Posterior vena cava (tissue), 2 donors: ENCODE measurements at regions of chr1 and their contacts with region 1.

Region 1: GRCh38 chr1:61079898-61080336 is 2.4 kb upstream of the NFIA start:
- DNase-seq: peak; percentile 91

Region 2: GRCh38 chr1:60765204-60765603 is 314.7 kb before region 1 on chr1:
- intact Hi-C with region 1: no loop called
- DNase-seq: no peak

Region 3: DNA sequence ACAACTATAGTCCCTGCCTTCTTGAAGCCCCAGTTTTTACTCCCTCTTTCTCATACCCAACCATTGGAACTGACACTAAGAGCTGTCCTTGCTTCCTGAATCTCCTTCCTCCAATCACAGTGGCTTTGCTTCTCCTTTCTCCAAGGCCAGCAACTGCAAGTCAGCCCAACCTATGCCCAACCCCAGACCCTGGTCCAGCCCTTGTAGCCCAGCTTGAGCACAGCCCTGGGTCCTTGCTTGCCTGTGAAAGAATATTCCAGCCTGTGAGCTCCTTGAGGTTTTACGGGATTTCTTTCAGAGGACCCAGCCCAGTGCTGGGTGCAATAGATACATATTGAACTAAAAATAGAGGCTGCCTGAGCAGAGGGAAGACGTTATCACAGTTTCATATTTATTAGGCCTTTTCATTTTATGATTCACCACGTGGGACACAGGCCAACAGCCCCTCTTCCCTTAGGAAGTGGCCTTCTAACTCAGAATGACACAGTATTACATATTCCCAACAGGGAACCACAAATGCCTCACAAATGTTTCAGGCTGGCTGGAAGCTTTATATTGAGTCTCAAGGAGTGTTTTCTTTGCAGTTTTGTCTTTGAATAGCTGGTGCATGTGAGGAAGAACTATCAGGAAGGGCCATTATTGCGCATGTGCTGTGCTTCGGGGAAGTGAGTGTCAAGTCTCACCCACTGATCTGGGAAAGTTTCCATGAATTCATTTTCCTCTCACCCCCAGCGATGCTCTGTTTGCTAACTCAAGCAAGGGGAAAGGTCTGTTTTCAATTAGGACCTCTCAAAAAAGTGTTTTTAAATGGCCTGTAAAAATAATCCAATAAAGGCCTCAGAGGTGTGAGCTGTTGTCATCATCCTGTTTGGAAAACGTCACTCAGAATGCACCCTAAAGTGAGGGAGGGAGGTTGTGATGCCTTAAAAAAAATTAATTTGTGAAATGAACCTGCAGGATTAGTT is 89.9 kb before region 1 on chr1:
- intact Hi-C with region 1: loop called in 1 of 2 experiments (anchors 5 kb)
- DNase-seq: peak; percentile 91

Region 4: DNA sequence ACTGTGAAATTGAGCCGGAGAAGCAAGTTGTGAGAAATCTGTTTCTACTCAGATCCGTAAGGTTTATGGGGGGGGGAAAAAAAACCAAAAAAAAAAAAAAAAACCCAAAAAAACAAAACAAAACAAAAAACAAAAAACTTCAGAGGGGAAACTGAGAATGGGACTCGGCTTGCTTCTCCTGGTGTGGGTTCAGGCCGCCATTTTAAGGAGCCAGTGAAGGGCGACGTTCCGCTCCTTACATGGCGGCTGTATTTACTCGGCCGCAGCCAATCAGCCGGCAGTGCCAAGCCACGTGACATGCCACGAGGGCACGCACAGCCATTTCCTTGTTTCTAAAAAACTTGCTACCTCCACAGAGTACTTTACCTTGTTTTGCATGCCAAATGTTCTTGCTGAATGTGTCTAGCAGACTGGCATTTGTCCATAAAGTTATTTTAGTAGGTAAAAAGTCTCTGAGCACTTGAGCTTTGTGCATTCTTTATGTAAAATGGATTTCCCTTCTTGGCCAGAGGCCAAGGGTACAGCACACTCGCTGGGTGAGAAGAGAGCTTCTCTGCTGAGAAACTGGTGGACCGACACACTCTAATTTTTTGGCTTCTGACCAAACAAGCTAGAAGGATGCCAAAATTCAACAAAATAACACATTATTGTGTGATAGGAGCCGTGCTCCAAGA is 104.3 kb after region 1 on chr1:
- intact Hi-C with region 1: loop called in 1 of 2 experiments (anchors 10 kb)
- DNase-seq: peak; percentile 97

Region 5: DNA sequence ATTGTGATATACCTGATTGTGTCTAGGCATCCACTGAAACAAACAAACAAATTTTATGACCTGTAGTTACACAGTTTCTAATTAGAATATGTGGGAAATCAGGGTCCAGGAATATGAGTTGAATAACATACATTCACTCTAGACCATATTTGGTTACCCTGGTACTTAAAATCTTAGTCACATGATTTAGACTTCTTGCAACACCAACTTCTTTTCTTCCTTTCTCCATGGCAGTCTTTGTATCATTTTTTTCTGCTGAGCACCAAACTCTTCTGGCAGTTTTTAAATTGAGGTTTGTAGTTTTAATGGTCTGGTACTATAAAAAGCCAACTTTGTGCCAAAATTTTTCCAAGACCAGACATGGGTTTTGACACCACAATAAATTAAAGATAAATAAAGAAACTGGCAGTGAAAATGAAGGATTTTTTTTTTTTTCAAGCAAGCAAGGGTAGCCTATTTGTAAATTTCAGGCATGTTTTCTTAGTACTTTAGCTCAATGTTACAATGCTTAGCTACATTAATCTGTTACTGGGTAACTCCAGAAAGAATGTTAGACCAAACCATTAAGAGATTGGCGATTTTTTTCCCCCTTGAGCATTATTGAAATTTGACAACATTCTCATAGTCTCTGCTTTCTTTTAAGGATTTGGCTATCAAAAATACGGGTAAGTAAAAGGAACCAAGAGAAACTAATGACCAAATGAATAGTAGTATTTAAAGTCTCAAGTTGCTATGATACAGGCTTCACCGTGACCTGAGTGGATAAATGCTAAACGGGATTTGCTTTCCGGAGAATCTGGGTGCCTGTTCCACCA is 110.9 kb after region 1 on chr1:
- intact Hi-C with region 1: loop called (anchors 5 to 10 kb)
- DNase-seq: no peak

Region 6: DNA sequence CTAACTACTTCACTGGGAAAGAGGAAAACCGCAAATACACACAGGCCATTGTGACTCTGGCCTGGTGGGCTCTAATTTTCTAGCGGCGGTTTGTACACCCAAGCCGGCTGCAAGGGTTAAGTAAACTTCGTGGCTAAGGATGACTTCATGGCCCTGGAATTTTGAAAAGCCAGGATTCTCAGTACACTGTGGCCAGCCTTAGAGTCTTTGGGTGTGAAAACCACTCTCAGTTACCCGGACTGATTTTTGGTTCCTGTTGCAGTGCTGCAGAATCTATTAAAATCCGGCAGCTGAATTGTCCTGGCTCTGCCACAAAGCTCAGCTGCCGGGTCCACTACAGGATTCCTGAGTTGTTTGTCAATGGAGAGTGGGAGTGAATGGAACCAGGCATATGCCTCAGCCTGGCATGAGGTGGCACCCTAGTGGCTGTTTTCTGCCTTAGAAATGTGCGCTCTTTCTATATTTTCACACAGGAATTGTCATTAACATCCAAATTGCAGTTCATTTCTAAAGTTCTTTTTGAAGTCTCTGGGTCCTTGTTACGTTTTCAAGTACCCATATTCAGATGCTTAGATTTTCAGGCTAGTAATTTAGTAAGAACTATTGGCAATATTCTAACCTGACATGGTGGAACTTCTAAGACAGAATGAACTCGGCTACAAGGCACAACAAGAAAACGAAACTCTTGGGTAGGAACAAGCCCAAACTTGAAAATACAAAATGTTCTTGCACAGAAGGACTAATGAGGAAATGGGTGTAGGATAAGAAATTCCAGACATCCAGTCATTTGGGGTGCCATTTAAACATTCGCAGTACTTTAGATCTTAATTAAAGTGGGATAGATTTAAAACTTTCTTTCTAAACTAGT is 258.3 kb after region 1 on chr1:
- intact Hi-C with region 1: loop called in 1 of 2 experiments (anchors 10 kb)
- DNase-seq: no peak